ENCODE measurements at regions of chr9 and their contacts with region 1.

Region 1: DNA sequence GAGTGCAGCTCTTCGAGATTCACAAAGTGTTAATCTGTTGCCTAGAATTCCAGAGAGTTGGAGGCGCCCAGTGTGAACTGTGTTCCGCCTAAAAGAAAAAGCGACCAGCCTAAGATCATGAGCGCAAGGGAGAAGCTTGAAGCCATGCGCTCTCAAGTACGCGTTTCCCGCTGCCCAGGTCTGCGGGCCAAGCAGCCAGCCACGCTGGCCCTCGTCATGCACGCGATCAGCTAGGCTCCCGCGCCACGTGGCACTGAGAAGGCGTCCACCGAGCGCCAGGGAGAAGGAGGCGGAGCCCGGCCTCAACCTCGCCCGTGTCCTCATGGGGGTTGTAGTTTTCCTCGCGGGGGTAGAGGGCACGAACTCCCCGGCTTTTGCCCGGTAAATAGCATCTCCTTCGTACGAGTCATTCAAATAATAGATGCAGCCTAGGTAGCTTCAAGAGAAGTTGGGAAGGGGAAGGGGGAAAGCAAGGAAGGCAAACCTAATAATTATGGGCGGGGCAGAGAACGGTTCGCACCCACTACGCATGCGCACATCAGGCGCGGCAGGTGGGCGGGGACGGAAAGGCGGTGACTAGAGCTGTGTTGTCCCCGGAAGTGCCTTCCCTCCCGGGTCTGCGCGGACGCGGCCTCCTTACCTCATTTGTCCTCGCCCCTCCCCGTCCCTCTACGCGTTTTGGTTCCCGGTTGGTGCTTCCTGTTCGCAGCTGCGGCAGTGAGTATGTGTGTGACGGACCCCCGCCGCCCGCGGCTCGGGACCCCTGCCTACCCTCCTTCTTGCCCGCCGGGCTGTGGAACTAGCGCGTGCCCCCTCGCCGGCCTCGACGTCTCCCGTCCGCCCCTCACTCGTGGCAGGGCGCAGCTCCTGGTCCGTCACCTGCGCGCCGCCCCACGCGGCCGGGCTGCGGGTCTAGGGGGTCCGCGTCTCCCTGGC is at the start of gene ZCCHC7:
- DNase-seq: peak; percentile 98
- H3K4me3 Mint-ChIP-seq: peak within 1 kb of the TSS; percentile 94
- H3K27ac Mint-ChIP-seq: peak within 1 kb of the TSS; percentile 96
- H3K4me1 Mint-ChIP-seq: peaks cover 35% of the 10 kb centered on the region
- H3K27me3 Mint-ChIP-seq: no peaks in the 10 kb centered on the region
- total RNA-seq, gene ZCCHC7: 28.8 to 29.1 TPM

Region 2: GRCh38 chr9:36924071-36924470 is 196.1 kb before region 1 on chr9:
- CTCF ChIA-PET with region 1: no interaction called
- intact Hi-C with region 1: loop called (anchors 1 kb)
- DNase-seq: peak; percentile 58
- H3K4me3 Mint-ChIP-seq: no peak overlapping the region
- H3K27ac Mint-ChIP-seq: peak overlapping the region; percentile 31
- H3K4me1 Mint-ChIP-seq: peaks cover 27% of the 10 kb centered on the region
- H3K27me3 Mint-ChIP-seq: peaks cover 16% of the 10 kb centered on the region

Region 3: DNA sequence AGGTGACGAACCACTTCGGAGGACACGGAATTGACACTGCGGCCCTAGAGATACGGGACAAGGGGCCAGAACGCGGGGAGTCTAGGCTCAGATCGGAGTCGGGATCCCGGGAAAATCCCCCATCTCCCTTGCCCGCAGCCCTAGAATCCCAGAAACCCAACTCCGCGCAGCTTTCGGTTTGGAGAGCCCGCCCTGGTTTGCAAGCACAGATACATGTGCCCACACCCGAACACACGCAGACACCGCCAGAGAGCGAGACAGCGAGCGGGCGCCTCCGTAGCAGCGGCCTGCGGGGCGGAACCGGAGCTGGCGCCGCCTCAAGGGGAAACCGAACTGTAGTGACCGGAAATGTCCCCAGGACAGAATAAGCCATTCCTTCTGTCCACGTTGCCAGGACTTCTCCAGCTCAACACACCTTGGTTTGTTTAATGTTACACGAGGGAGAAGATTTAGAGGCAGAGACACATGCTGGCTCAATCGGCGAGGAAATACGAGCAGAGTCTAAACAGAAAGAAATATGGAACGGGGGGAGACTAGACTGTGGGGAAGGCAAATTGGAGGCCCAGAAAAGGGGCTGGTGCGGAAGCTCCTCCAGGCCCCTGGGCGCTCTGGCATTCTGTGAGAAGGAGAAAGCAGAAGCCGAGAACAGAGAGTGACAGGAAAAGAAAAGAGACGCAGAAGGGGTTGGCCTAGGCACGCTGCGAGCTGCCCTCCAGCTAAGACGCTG is 83.2 kb before region 1 on chr9:
- CTCF ChIA-PET with region 1: interaction called, 4 read pairs
- intact Hi-C with region 1: loop called (anchors 1 kb)
- DNase-seq: peak; percentile 51
- H3K4me3 Mint-ChIP-seq: peak overlapping the region; percentile 81
- H3K27ac Mint-ChIP-seq: no peak overlapping the region
- H3K4me1 Mint-ChIP-seq: peaks cover 30% of the 10 kb centered on the region
- H3K27me3 Mint-ChIP-seq: peaks cover 80% of the 10 kb centered on the region

Region 4: DNA sequence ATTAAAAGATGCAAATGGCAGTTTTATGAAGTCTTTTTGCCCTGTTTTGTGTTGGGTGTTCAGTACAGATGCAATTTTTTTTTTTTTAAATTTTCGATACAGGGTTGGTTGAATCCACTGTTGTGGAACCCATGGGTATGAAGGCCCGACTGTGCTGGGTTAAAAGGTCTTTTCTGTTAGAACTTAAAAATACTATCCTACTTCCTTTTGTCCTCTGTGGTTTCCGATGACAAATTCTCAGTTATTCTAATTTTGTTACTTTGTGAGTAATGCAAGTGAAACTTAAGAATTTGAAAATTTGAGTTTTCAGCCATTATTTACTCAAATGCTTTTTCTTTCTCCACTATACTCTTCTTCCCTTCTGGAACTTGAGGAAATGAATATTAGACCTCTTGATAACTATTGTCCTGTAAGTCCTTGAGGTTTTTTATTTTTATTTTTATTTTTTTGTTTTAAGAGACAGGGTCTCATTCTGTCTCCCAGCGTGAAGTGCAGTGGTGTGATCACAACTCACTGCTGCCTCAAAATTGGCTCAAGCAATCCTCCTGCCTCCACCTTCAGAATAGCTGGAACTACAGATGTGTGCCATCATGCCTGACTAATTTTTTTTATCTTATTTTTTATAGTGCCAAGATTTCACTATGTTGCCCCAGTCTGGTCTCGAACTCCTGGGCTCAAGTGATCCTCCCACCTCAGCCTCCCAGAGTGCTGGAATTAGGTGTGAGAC is 67.7 kb after region 1 on chr9:
- CTCF ChIA-PET with region 1: no interaction called
- intact Hi-C with region 1: loop called (anchors 2 kb)
- DNase-seq: peak; percentile 18
- H3K4me3 Mint-ChIP-seq: no peak overlapping the region
- H3K27ac Mint-ChIP-seq: peak overlapping the region; percentile 85
- H3K4me1 Mint-ChIP-seq: peaks cover 52% of the 10 kb centered on the region
- H3K27me3 Mint-ChIP-seq: no peaks in the 10 kb centered on the region

Region 5: GRCh38 chr9:37262410-37262809 is 142.2 kb after region 1 on chr9:
- CTCF ChIA-PET with region 1: no interaction called
- intact Hi-C with region 1: loop called (anchors 5 kb)
- DNase-seq: no peak
- H3K4me3 Mint-ChIP-seq: no peak overlapping the region
- H3K27ac Mint-ChIP-seq: no peak overlapping the region
- H3K4me1 Mint-ChIP-seq: peaks cover 9% of the 10 kb centered on the region
- H3K27me3 Mint-ChIP-seq: no peaks in the 10 kb centered on the region

Region 6: GRCh38 chr9:37302277-37302676 is 182.1 kb after region 1 on chr9:
- CTCF ChIA-PET with region 1: no interaction called
- intact Hi-C with region 1: loop called (anchors 1 kb)
- DNase-seq: peak; percentile 70
- H3K4me3 Mint-ChIP-seq: peak overlapping the region; percentile 25
- H3K27ac Mint-ChIP-seq: peak overlapping the region; percentile 92
- H3K4me1 Mint-ChIP-seq: peaks cover 59% of the 10 kb centered on the region
- H3K27me3 Mint-ChIP-seq: no peaks in the 10 kb centered on the region